HAP-1 (cell line): ENCODE measurements at regions of chr5 and their contacts with region 1.

Region 1: DNA sequence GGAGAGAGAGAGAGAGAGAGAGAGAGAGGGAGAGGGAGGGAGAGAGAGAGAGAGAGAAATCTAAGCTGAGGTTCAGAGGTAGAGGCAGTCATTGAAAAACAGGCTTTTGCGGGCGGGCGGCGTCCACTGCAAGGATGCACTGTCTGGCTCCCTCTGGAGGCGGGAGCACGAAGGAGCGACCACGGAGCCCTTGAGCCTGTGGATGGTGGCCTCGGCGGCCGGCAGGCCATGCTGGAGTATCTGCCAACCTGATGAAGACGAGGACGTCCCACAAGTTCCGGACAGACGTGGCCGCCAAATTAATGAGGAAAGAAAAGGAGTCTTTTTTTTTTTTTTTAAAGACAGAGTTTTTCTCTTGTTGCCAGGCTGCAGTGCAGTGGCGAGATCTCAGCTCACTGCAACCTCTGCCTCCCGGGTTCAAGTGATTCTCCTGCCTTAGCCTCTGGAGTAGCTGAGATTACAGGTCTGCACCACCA is 2.2 kb upstream of the CCDC125 start:
- DNase-seq: peak; percentile 81 to 92
- H3K4me3 ChIP-seq: no peak overlapping the region
- H3K4me1 ChIP-seq: peaks cover 7% of the 10 kb centered on the region
- H3K27me3 ChIP-seq: no peaks in the 10 kb centered on the region

Region 2: GRCh38 chr5:68548959-68549687 is 785.7 kb before region 1 on chr5:
- in situ Hi-C with region 1: no loop called
- DNase-seq: no peak
- H3K4me3 ChIP-seq: no peak overlapping the region
- H3K4me1 ChIP-seq: peaks cover 7% of the 10 kb centered on the region; the same call in 1 of the 2 replicates
- H3K27me3 ChIP-seq: no peaks in the 10 kb centered on the region

Region 3: DNA sequence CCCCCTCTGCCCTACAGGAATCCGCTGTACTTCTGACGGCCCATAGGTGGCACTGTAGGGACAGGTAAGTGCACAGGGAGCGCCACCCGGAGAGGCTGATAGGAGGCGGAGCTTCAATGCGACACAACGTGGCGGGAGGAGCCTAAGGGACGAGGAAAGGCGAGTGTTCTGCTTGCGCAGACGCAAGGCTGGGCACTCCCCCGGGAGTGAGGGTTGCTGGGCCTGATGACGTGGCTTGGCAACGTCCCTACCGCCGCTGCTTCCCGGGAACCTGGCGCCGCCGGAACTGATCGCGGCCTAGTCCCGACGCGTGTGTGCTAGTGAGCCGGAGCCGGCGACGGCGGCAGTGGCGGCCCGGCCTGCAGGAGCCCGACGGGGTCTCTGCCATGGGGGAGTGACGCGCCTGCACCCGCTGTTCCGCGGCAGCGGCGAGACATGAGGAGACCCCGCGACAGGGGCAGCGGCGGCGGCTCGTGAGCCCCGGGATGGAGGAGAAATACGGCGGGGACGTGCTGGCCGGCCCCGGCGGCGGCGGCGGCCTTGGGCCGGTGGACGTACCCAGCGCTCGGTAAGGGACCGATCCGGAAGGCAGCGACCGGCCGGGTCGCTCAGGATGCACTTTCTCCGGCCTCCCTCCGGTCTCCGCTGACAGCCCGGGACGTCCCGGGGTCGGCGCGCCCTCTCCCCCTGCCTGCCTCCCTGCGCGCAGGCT is 240.9 kb before region 1 on chr5 and contains the start of gene SLC30A5:
- in situ Hi-C with region 1: loop called (anchors 25 kb)
- DNase-seq: peak; percentile 100
- H3K4me3 ChIP-seq: peak within 1 kb of the TSS; percentile 86
- H3K4me1 ChIP-seq: peaks cover 5% of the 10 kb centered on the region
- H3K27me3 ChIP-seq: no peaks in the 10 kb centered on the region

Region 4: GRCh38 chr5:69234457-69235268 is 100.2 kb before region 1 on chr5 and contains the start of gene CDK7:
- in situ Hi-C with region 1: loop called (anchors 25 kb)
- DNase-seq: peak; percentile 92 to 95
- H3K4me3 ChIP-seq: peak within 1 kb of the TSS; percentile 78
- H3K4me1 ChIP-seq: peaks cover 10% of the 10 kb centered on the region
- H3K27me3 ChIP-seq: no peaks in the 10 kb centered on the region